Aorta (tissue), 5 donors: ENCODE measurements at regions of chr19 and their contacts with region 1.

Region 1: GRCh38 chr19:40640744-40641143 is 39.6 kb downstream of the LTBP4 start:
- DNase-seq: peak in 1 of 2 donors; percentile 66
- ATAC-seq: peak; percentile 41
- H3K4me3 ChIP-seq: no peak overlapping the region
- H3K27ac ChIP-seq: peak overlapping the region; percentile 79 to 80
- H3K4me1 ChIP-seq: no peaks in the 10 kb centered on the region
- H3K27me3 ChIP-seq: no peaks in the 10 kb centered on the region

Region 2: DNA sequence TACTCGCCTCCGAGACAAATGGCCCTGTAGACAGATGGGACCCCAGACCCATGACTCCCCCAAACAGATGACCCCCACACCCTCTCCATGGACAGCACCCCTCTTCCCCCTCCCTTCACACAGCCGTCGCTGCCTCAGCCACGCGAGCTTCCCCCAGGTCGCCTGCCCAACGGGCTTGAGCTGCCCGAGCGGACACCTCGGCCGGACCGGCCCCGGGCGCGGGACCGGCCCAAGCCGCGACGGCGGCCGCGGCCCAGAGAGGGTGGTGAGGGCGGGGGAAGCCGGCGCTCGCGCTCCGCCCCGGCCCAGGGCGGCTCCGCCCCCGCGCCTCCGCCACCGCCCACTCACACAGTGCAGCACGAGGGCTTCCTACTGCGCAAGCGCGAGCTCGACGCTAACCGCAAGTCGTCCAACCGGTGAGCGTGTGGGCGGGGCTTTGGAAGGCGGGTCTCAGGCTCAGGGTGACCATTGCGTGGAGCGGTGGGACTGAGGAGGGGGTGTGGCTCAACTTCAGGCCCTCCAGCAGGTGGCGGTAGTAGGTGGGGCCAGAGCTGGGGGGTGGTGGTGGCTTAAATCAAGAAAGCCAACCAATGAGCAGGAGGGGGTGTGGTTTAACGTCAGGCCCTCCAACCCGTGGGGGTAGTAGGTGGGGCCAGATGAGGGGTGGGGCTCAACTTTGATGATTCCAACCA is 70.3 kb before region 1 on chr19:
- intact Hi-C with region 1: no loop called
- DNase-seq: peak; percentile 100
- ATAC-seq: peak; percentile 96
- H3K4me3 ChIP-seq: peak overlapping the region in 1 of 2 donors; percentile 11
- H3K27ac ChIP-seq: no peak overlapping the region
- H3K4me1 ChIP-seq: no peaks in the 10 kb centered on the region
- H3K27me3 ChIP-seq: no peaks in the 10 kb centered on the region

Region 3: GRCh38 chr19:40603389-40604135 is 37.2 kb before region 1 on chr19:
- intact Hi-C with region 1: loop called (anchors 5 kb)
- DNase-seq: peak; percentile 98 to 99
- ATAC-seq: peak; percentile 87
- H3K4me3 ChIP-seq: peak overlapping the region in 1 of 2 donors; percentile 11
- H3K27ac ChIP-seq: peak overlapping the region; percentile 5 to 69
- H3K4me1 ChIP-seq: no peaks in the 10 kb centered on the region
- H3K27me3 ChIP-seq: no peaks in the 10 kb centered on the region

Region 4: GRCh38 chr19:40674291-40674690 is 33.5 kb after region 1 on chr19:
- intact Hi-C with region 1: no loop called
- DNase-seq: no peak
- ATAC-seq: no peak
- H3K4me3 ChIP-seq: no peak overlapping the region
- H3K27ac ChIP-seq: no peak overlapping the region
- H3K4me1 ChIP-seq: no peaks in the 10 kb centered on the region
- H3K27me3 ChIP-seq: no peaks in the 10 kb centered on the region